PC-9 (cell line): ENCODE measurements at regions of chr5 and their contacts with region 1.

Region 1: DNA sequence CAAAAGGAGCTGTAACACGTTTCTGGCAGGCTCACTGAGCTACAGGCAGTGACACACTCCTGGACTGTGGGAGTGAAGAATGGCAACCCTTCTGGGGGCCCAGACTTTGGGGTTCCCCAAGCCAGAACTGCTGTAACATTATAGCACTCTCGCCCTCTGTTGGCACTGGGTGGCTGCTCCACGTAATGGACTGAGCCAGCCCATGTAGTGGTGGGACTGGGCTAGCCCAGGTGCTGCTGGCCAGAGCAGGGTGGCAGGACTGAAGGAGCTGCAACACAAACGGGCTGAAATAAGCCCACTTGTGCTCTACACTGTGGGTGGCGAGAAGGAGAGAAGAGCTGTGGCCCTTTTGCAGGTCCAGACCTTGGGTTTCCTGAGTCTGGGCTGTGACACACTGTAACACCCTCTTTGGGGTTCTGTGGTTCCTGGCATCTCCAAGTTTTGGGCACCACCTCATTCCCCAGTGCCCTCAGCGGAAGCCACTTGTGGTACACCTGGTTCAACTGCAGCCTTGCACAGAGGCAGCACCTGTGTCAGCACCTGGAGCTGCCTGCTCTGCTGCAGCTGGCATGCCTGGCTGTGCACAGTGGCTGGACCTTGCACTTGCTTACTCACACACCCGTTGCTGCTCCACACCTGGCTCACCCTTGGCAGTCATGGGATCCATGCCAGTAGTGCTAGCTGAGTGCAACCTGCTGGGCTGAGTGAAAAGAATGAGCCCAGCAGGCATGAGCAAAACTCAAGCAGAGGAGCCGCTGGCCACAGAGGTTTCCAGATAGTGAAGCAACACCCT is 95.0 kb upstream of the PRR16 start:
- DNase-seq: peak; percentile 53 to 73
- H3K4me3 ChIP-seq: no peak overlapping the region
- H3K27ac ChIP-seq: no peak overlapping the region
- H3K4me1 ChIP-seq: peaks cover 12% of the 10 kb centered on the region; the same call in 1 of the 2 replicates
- H3K27me3 ChIP-seq: no peaks in the 10 kb centered on the region
- CTCF ChIP-seq: no peak

Region 2: DNA sequence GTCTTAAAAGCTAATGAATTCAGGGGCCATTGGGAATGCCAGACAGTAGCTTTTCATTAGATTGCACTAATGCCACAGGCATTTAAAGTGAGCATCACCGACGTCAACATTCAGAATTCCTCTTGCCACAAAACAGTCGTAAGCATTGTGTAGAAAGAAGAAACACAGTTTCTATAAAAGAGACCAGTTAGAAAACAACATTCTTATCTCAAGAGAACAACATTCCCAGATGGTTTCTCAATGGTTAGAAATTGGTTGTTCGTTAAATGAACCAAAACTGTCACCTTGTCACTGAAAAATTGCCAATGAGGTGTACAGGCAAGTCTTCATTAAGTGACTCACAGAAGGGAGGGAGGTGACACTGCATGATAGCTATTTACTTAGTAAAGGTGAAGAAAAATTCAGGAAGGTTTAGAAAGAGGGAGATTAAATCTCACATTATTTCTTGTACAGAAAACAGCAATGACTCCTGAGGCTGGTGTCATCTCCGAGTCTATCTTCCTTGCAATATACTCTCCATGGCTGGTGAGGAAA is 306.5 kb before region 1 on chr5:
- CTCF ChIA-PET with region 1: no interaction called
- POLR2A ChIA-PET with region 1: no interaction called
- intact Hi-C with region 1: loop called (anchors 10 kb)
- DNase-seq: peak; percentile 6 to 68
- H3K4me3 ChIP-seq: no peak overlapping the region
- H3K27ac ChIP-seq: peak overlapping the region; percentile 52; the same call in 1 of the 2 replicates
- H3K4me1 ChIP-seq: peaks cover 13% of the 10 kb centered on the region
- H3K27me3 ChIP-seq: no peaks in the 10 kb centered on the region
- CTCF ChIP-seq: no peak